Dendritic cell treated with granulocyte-macrophage colony-stimulating factor and Interleukin-4, amounts not matched to agents 40 ng/mL and 50 ng/mL, for 4 days (primary cell): ENCODE measurements at regions of chr12 and their contacts with region 1.

Region 1: GRCh38 chr12:57487597-57488401 is at the start of gene MARS1:
- H3K4me3 Mint-ChIP-seq: peak within 1 kb of the TSS; percentile 90
- H3K27ac Mint-ChIP-seq: peak within 1 kb of the TSS; percentile 91
- H3K4me1 Mint-ChIP-seq: peaks cover 33% of the 10 kb centered on the region
- H3K27me3 Mint-ChIP-seq: no peaks in the 10 kb centered on the region

Region 2: GRCh38 chr12:57520053-57520871 is 32.5 kb after region 1 on chr12 and contains the start of gene DDIT3:
- intact Hi-C with region 1: loop called (anchors 1 kb)
- H3K4me3 Mint-ChIP-seq: peak within 1 kb of the TSS; percentile 95
- H3K27ac Mint-ChIP-seq: peak within 1 kb of the TSS; percentile 98
- H3K4me1 Mint-ChIP-seq: peaks cover 69% of the 10 kb centered on the region
- H3K27me3 Mint-ChIP-seq: no peaks in the 10 kb centered on the region